ENCODE measurements at regions of chr7 and their contacts with region 1.

Region 1: DNA sequence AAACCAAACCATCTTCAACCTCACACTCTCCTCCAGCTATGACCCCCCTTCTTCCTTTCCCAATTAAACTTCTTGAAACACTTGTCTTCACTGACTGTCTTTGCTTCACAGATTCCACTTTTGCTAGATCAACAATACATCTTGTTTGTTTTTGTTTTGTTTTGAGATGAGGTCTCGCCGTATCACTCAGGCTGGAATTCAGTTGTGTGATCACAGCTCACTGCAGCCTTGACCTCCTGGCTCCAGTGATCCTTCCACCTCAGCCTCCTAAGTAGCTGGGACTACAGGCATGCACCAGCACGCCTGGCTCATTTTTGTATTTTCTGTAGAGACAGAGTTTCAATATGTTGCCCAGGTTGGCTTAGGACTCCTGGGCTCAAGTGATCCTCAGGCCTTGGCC is 59.7 kb downstream of the HIP1 start:
- DNase-seq: no peak
- H3K27ac ChIP-seq: no peak overlapping the region
- CTCF ChIP-seq: no peak

Region 2: DNA sequence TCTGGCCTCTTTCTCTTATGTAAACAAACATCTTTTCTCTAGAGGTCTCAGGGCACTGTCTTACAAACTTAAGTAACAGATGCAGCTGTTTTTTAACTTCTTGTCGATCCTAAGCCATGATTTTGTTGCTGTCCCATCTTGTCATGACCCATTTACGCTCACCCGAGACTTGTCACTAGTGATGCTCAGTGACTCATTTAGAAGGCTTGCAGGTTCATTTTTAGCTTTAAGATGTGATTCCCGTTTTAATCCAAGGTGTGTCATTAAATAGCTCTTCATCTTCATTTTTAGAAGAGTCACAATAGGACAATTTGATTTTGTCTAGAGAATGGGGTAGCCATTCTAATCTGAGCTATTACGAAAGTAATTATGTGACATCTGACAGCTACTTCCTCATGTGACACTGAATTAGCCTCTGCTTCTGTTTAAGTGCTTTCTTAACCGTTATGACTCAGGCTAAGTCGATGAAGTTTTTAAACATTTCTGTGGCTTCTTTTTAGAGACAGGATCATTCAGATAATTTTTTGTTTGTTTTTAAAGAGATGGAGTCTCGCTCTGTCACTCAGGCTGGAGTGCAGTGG is 144.2 kb before region 1 on chr7:
- CTCF ChIA-PET with region 1: no interaction called
- POLR2A ChIA-PET with region 1: no interaction called
- DNase-seq: no peak
- H3K27ac ChIP-seq: peak overlapping the region; percentile 14; the same call in 1 of the 2 replicates
- CTCF ChIP-seq: no peak

Region 3: DNA sequence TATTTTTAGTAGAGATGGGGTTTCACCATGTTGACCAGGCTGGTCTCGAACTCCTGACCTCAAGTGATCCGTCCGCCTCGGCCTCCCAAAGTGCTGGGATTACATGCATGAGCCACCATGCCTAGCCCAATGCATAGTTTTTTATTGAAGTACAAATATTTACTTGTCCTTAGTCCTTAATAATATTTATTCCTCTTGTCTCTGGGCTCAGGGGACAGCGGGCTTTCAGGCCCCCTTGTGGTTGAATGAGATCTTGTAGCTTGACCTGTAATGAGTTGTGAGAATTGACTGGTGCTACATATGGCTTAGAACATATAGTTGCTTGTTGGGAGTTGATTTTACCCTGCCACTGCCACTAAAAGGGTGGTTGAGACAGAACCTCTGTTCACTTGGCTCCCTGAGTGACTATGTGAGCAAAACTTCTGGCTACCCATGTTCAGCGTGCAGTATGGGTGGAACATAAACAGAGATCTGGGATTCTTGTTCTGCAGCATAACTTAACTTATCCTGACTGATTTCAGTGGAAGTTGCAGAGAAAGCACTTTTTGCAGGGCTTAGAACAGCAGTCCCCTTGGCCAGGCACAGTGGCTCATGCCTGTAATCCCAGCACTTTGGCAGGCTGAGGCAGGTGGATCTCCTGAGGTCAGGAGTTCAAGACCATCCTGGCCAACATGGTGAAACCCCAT is 78.1 kb after region 1 on chr7:
- CTCF ChIA-PET with region 1: interaction called, 10 read pairs
- POLR2A ChIA-PET with region 1: no interaction called
- DNase-seq: peak; percentile 47
- H3K27ac ChIP-seq: no peak overlapping the region
- CTCF ChIP-seq: peak; percentile 30